GM18951 (cell line): ENCODE measurements at regions of chr4 and their contacts with region 1.

Region 1: GRCh38 chr4:179307297-179308136 is 1865.3 kb upstream of the AGA start:
- POLR2A ChIP-seq: no peak

Region 2: DNA sequence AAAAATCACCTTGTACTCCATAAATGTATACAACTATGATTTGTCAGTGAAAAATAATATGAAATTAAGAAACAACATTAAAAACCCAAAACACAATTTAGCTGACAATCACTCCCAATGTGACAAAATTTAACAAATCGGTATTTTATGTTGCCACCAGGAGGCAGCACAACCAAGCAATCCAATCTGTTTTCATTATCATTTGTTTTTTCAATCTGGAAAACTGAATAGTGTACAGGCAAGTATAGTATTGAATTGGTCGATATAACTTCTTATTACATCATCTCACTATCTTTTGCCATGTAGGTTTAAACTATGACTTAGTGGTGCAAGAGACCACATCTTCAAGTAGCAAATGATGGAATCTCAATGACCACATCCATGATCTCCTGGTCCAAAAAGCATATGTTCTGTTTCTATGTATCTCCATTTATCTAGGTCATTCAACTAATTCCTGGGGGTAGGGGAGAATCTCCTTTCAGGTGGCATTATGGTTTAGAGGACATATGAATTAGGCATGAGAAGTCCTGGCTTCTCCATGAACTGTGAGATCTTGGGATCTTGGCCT is 1752.4 kb before region 1 on chr4:
- in situ Hi-C with region 1: loop called (anchors 25 kb)
- POLR2A ChIP-seq: no peak